Activated T-helper 1 cell treated with anti-CD3 and anti-CD28 coated beads, Interleukin-12 subunit alpha, Interleukin-12 subunit beta, Interleukin-2, Interleukin-4 antibody, amounts not matched to agents 30 ng/mL and 10 ng/mL and 1 ng/mL, durations not matched to agents 14 hours and 24 hours and 36 hours (primary cell): ENCODE measurements at regions of chr6 and their contacts with region 1.

Region 1: GRCh38 chr6:11496152-11497060 is 41.1 kb upstream of the TMEM170B start:
- DNase-seq: peak; percentile 72
- H3K4me3 Mint-ChIP-seq: no peak overlapping the region
- H3K27ac Mint-ChIP-seq: no peak overlapping the region
- H3K4me1 Mint-ChIP-seq: peaks cover 26% of the 10 kb centered on the region
- H3K27me3 Mint-ChIP-seq: peaks cover 3% of the 10 kb centered on the region

Region 2: GRCh38 chr6:11093589-11094410 is 402.6 kb before region 1 on chr6 and contains the start of gene SMIM13:
- intact Hi-C with region 1: loop called (anchors 1 kb)
- DNase-seq: peak; percentile 94
- H3K4me3 Mint-ChIP-seq: peak within 1 kb of the TSS; percentile 92
- H3K27ac Mint-ChIP-seq: peak within 1 kb of the TSS; percentile 97
- H3K4me1 Mint-ChIP-seq: peaks cover 31% of the 10 kb centered on the region
- H3K27me3 Mint-ChIP-seq: no peaks in the 10 kb centered on the region
- total RNA-seq, gene SMIM13: 14.6 and 18.4 TPM in 2 replicates

Region 3: DNA sequence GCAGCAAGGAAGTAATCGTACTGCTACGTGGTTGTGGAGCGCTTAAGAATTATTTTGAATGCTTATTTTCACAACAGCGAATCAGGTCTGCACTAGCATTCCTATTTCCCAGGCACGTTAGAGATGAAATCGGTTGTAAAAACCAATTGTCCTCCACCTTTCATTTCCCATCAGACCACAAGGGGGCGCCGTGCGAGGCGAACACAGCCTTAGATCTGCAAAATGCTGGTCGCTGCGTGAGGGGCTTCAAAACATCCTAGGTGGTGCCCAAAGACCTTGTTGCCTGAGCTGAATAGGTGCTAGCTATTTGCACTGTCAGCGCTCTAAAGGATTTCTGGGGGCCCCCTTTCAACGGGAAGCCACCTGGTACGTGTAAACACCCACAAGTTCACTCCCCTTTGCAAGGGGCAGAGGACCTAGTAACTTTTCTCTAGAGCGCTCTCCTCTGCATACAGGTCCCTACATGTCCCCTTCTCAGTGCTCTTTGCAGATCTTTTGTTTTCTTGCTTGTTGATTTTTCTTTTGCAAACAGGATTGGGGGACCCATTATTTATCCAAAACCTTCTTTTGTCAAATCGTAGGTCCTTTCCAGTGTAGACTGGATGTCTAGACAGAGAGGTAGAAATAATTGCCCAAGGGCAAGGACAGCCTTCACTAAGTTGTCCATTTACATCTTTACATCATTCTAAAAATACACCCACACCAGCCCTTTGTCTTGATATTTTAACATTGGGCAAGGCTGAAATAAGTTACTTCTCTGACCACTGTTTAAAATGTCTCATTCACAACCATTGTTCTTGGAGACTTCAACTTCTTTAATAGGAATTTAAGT is 323.7 kb before region 1 on chr6:
- intact Hi-C with region 1: loop called (anchors 1 kb)
- DNase-seq: peak; percentile 47
- H3K4me3 Mint-ChIP-seq: no peak overlapping the region
- H3K27ac Mint-ChIP-seq: no peak overlapping the region
- H3K4me1 Mint-ChIP-seq: peaks cover 25% of the 10 kb centered on the region
- H3K27me3 Mint-ChIP-seq: peaks cover 3% of the 10 kb centered on the region

Region 4: GRCh38 chr6:11343963-11344747 is 152.3 kb before region 1 on chr6:
- intact Hi-C with region 1: loop called (anchors 1 kb)
- DNase-seq: no peak
- H3K4me3 Mint-ChIP-seq: peak overlapping the region; percentile 4
- H3K27ac Mint-ChIP-seq: peak overlapping the region; percentile 61
- H3K4me1 Mint-ChIP-seq: peaks cover 90% of the 10 kb centered on the region
- H3K27me3 Mint-ChIP-seq: no peaks in the 10 kb centered on the region

Region 5: GRCh38 chr6:11366183-11366933 is 130.0 kb before region 1 on chr6:
- intact Hi-C with region 1: loop called (anchors 1 kb)
- DNase-seq: peak; percentile 60
- H3K4me3 Mint-ChIP-seq: peak overlapping the region; percentile 55
- H3K27ac Mint-ChIP-seq: peak overlapping the region; percentile 92
- H3K4me1 Mint-ChIP-seq: peaks cover 95% of the 10 kb centered on the region
- H3K27me3 Mint-ChIP-seq: no peaks in the 10 kb centered on the region

Region 6: DNA sequence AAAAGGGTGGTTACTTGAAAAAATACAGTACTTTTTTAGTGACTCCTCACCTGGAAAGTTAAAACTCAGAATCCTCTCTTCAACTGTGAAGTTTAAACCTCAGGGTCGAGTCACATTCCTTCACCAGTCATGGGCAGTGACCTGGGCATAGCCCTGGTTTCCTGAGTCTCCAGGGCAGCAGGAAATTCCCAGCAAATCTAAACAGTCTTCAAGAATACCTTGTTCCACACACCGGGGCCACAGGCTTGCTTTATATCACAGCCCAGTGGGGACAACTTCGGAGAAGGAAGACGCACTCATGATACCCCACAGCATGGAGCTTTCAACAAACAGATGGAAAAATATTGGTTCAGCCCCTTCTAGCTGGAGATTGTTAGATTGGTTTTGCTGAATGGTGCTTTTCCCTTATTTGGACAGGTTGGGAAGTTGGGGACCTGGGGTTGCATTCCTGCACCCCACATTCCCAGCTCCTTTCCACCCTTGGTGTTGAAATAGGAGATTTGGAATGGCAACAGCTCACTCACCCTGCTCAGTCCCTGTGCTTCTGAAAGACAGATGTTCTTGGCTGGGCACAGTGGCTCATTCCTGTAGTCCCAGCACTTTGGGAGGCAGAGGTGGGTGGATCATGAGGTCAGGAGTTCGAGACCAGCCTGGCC is 71.9 kb before region 1 on chr6:
- intact Hi-C with region 1: loop called (anchors 2 kb)
- DNase-seq: no peak
- H3K4me3 Mint-ChIP-seq: no peak overlapping the region
- H3K27ac Mint-ChIP-seq: peak overlapping the region; percentile 7
- H3K4me1 Mint-ChIP-seq: peaks cover 63% of the 10 kb centered on the region
- H3K27me3 Mint-ChIP-seq: no peaks in the 10 kb centered on the region

Region 7: GRCh38 chr6:11459079-11459610 is 37.3 kb before region 1 on chr6:
- intact Hi-C with region 1: no loop called
- DNase-seq: no peak
- H3K4me3 Mint-ChIP-seq: no peak overlapping the region
- H3K27ac Mint-ChIP-seq: peak overlapping the region; percentile 88
- H3K4me1 Mint-ChIP-seq: peaks cover 33% of the 10 kb centered on the region
- H3K27me3 Mint-ChIP-seq: no peaks in the 10 kb centered on the region

Region 8: DNA sequence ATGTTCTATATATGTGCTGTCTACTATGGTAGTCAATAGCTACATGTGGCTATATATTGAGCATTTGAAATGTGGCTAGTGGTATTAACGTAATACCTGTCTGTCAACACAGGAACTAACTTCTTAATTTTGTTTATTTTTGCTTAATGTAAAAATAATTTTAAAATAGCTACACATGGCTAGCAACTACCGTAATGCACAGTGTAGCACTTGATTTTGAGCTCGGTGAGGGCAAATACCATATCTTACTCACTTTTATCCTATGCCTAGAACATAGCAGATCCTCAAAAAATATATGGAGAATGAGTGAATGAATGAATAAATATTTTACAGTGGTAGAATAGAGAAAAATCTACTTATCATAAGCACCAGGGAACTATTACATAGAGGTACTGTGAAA is 13.1 kb after region 1 on chr6:
- intact Hi-C with region 1: no loop called
- DNase-seq: no peak
- H3K4me3 Mint-ChIP-seq: no peak overlapping the region
- H3K27ac Mint-ChIP-seq: no peak overlapping the region
- H3K4me1 Mint-ChIP-seq: no peaks in the 10 kb centered on the region
- H3K27me3 Mint-ChIP-seq: peaks cover 15% of the 10 kb centered on the region

Region 9: GRCh38 chr6:11575408-11576033 is 79.1 kb after region 1 on chr6:
- intact Hi-C with region 1: loop called (anchors 1 kb)
- DNase-seq: peak; percentile 37
- H3K4me3 Mint-ChIP-seq: no peak overlapping the region
- H3K27ac Mint-ChIP-seq: no peak overlapping the region
- H3K4me1 Mint-ChIP-seq: no peaks in the 10 kb centered on the region
- H3K27me3 Mint-ChIP-seq: peaks cover 2% of the 10 kb centered on the region